ENCODE measurements at regions of chr1 and their contacts with region 1.

Region 1: GRCh38 chr1:64268653-64269557 is 65.5 kb downstream of the UBE2U start:
- DNase-seq: peak; percentile 57
- H3K4me3 ChIP-seq: peak overlapping the region in 1 of 3 experiments; percentile 34
- H3K27ac ChIP-seq: no peak overlapping the region
- H3K4me1 ChIP-seq: peaks cover 5% of the 10 kb centered on the region
- H3K27me3 ChIP-seq: no peaks in the 10 kb centered on the region
- CTCF ChIP-seq: peak; percentile 55 to 77

Region 2: GRCh38 chr1:64147759-64148158 is 121.1 kb before region 1 on chr1:
- CTCF ChIA-PET with region 1: no interaction called
- dilution Hi-C with region 1: no loop called
- in situ Hi-C with region 1: no loop called
- intact Hi-C with region 1: no loop called
- DNase-seq: no peak
- H3K4me3 ChIP-seq: no peak overlapping the region
- H3K27ac ChIP-seq: no peak overlapping the region
- H3K4me1 ChIP-seq: no peaks in the 10 kb centered on the region
- H3K27me3 ChIP-seq: no peaks in the 10 kb centered on the region
- CTCF ChIP-seq: no peak

Region 3: DNA sequence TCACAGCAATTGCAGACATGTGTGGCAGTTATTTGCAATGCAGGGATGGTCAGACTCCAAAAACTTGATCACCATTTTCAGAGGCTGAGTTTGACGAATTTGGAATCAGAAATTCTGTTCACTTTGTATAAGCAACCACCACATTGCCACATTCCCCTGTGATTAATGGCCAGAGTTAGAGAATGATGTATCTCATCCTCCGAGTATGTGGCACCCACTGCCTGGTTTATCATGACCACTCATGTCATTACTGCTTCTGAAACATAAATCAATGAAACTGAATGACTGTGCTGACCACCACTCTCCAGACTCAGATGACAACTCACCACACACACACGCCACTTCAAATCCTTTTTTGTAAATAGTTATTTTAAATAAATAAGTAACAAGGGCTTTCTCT is 134.4 kb after region 1 on chr1:
- CTCF ChIA-PET with region 1: no interaction called
- dilution Hi-C with region 1: no loop called
- in situ Hi-C with region 1: loop called in 1 of 2 experiments (anchors 10 kb)
- intact Hi-C with region 1: loop called (anchors 1 kb)
- DNase-seq: no peak
- H3K4me3 ChIP-seq: no peak overlapping the region
- H3K27ac ChIP-seq: no peak overlapping the region
- H3K4me1 ChIP-seq: no peaks in the 10 kb centered on the region
- H3K27me3 ChIP-seq: no peaks in the 10 kb centered on the region
- CTCF ChIP-seq: no peak

Region 4: GRCh38 chr1:64469977-64470664 is 201.2 kb after region 1 on chr1 and contains the start of gene CACHD1:
- CTCF ChIA-PET with region 1: no interaction called
- dilution Hi-C with region 1: no loop called
- in situ Hi-C with region 1: no loop called
- intact Hi-C with region 1: loop called (anchors 1 kb)
- DNase-seq: peak; percentile 80
- H3K4me3 ChIP-seq: peak within 1 kb of the TSS; percentile 43 to 76 (median 64)
- H3K27ac ChIP-seq: peak within 1 kb of the TSS; percentile 38
- H3K4me1 ChIP-seq: peaks cover 14% of the 10 kb centered on the region
- H3K27me3 ChIP-seq: no peaks in the 10 kb centered on the region
- CTCF ChIP-seq: peak in 1 of 2 donors; percentile 49
- total RNA-seq, gene CACHD1: 4.6 to 12.0 TPM

Region 5: DNA sequence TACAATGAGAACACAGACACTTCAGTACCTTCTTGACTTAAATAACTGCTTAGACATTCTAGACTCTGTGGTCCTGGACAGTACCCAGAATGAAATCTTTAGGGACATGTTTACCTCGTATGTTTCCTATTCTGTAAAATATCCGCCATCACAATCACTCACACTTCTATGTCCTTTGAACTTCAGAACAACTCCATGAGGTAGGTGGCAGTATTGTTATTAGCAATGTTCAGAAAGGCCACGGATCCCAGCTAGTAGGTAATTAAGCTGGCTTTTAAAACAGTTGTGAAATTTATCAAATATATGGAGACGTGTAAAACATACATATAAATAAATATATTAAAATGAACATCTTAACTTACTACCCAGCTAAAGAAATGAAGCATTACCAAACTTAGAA is 284.4 kb after region 1 on chr1:
- CTCF ChIA-PET with region 1: no interaction called
- dilution Hi-C with region 1: no loop called
- in situ Hi-C with region 1: no loop called
- intact Hi-C with region 1: no loop called
- DNase-seq: no peak
- H3K4me3 ChIP-seq: no peak overlapping the region
- H3K27ac ChIP-seq: no peak overlapping the region
- H3K4me1 ChIP-seq: no peaks in the 10 kb centered on the region
- H3K27me3 ChIP-seq: no peaks in the 10 kb centered on the region
- CTCF ChIP-seq: peak in 1 of 2 donors; percentile 23

Region 6: GRCh38 chr1:64598100-64598571 is 329.2 kb after region 1 on chr1:
- CTCF ChIA-PET with region 1: no interaction called
- dilution Hi-C with region 1: no loop called
- in situ Hi-C with region 1: loop called in 1 of 2 experiments (anchors 25 kb)
- intact Hi-C with region 1: no loop called
- DNase-seq: peak; percentile 75
- H3K4me3 ChIP-seq: peak overlapping the region in 1 of 3 experiments; percentile 1
- H3K27ac ChIP-seq: peak overlapping the region; percentile 33
- H3K4me1 ChIP-seq: peaks cover 14% of the 10 kb centered on the region
- H3K27me3 ChIP-seq: no peaks in the 10 kb centered on the region
- CTCF ChIP-seq: no peak

Region 7: DNA sequence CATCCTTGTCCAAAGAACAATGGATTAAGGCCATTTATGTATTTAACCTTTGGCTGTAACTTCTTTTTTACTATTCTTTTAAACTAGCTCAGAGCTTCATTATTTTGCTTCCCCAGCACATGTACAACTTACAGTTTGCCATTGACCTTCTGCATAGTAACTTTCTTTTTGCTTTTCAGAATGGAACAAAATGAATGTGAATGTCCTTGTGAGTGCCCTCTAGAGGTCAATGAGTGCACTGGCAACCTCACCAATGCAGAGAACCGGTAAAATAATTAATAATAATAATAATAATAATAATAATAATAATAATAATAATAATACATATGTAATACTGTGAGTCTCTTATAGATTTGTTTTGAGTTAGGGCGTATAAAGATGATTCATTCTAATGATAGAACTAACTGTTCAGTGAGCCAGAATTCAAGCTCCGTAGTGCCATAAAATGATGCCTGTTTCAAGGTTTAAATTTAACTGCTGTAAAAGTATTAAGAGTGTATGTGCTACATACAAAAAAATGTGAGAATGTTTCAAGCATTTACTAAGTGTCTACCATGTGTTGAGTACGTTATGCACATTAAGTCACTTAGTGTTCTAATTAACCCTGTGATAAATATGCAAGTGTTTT is 406.9 kb after region 1 on chr1:
- CTCF ChIA-PET with region 1: no interaction called
- dilution Hi-C with region 1: no loop called
- in situ Hi-C with region 1: loop called (anchors 10 to 25 kb)
- intact Hi-C with region 1: loop called (anchors 1 kb)
- DNase-seq: no peak
- H3K4me3 ChIP-seq: no peak overlapping the region
- H3K27ac ChIP-seq: no peak overlapping the region
- H3K4me1 ChIP-seq: no peaks in the 10 kb centered on the region
- H3K27me3 ChIP-seq: no peaks in the 10 kb centered on the region
- CTCF ChIP-seq: peak; percentile 56 to 71

Region 8: DNA sequence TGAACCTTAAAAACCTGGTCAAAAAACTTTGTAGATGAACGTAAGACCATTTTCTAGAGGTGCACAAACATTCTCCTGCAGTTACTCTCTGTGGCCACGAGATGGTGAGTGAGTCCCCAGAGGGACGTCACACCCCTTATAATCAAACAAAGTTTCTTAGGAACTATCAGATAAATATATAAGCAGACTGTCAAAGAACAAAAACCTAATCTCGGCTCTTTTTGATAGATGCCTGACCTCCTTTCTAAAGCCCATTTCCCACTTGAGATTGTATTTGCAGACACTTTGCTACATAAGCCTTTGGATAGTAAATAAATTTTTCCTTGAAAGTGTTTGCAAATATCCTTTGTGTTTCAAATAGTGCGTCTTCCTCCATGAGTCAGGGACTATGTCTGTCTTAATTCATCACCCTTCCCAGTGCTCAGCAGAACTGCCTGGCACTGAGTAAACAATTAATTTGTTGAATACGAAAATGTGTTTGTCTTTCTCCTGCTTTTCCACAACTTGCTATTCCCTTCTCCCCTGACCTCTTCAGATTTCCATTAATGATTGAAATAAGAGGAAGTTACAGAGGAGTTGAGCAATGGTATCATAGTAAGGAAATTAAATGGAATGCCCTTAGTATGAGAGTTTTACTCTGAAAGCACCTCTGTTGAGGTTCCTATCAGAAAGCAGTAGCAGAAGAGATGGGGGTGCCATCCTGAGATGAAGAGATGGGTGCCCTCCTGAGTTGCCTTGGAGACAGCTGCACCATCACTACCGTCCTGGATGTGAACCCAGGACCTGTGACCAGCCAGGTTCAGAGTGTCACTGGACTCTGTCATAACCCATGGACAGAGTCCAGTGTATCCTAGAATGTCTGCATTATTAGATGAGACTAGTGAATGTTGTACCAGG is 418.2 kb after region 1 on chr1:
- CTCF ChIA-PET with region 1: no interaction called
- dilution Hi-C with region 1: no loop called
- in situ Hi-C with region 1: loop called in 1 of 2 experiments (anchors 25 kb)
- intact Hi-C with region 1: no loop called
- DNase-seq: peak; percentile 21
- H3K4me3 ChIP-seq: no peak overlapping the region
- H3K27ac ChIP-seq: peak overlapping the region; percentile 3
- H3K4me1 ChIP-seq: peaks cover 14% of the 10 kb centered on the region
- H3K27me3 ChIP-seq: no peaks in the 10 kb centered on the region
- CTCF ChIP-seq: peak; percentile 86 to 88

Region 9: DNA sequence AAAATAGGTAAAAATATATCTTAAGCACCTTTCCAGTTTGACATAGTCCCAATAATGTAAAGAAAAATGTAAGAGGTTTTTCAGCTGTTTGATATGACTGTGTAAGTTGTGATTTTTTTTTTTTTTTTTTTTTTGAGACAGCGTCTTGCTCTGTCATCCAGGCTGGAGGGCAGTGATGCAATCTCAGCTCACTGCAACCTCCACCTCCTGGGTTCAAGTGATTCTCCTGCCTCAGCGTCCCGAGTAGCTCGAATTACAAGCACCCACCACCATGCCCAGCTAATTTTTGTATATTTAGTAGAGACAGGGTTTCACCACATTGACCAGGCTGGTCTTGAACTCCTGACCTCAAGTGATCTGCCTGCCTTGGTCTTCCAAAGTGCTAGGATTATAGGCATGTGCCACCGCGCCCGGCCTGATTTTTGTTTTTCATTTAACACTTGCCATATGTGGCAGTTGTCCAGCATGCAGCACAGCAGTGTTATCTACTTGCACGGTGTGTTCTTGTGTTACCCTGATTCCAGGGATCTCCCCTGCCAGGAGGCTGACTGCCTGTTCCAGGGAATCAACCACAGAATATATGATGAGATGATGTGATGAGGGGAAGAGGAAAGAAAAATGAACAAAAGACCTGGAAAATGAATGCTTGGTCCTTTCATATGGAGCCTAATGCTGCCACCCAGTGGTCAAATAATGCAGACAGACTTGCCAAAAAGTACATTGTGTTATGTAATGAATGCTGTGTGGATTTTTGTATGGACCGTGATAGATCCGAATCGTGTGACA is 555.0 kb after region 1 on chr1:
- CTCF ChIA-PET with region 1: no interaction called
- dilution Hi-C with region 1: no loop called
- in situ Hi-C with region 1: loop called (anchors 10 kb)
- intact Hi-C with region 1: loop called (anchors 1 kb)
- DNase-seq: peak; percentile 59
- H3K4me3 ChIP-seq: no peak overlapping the region
- H3K27ac ChIP-seq: no peak overlapping the region
- H3K4me1 ChIP-seq: no peaks in the 10 kb centered on the region
- H3K27me3 ChIP-seq: no peaks in the 10 kb centered on the region
- CTCF ChIP-seq: peak; percentile 66 to 83